Activated CD8-positive, alpha-beta T cell treated with anti-CD3 and anti-CD28 coated beads for 36 hours (primary cell): ENCODE measurements at regions of chr1 and their contacts with region 1.

Region 1: GRCh38 chr1:13699936-13700520 is at the start of gene PRDM2:
- DNase-seq: peak; percentile 64
- ATAC-seq: peak; percentile 51
- H3K4me3 Mint-ChIP-seq: peak within 1 kb of the TSS; percentile 95
- H3K27ac Mint-ChIP-seq: peak within 1 kb of the TSS; percentile 99
- H3K4me1 Mint-ChIP-seq: peaks cover 41% of the 10 kb centered on the region
- H3K27me3 Mint-ChIP-seq: no peaks in the 10 kb centered on the region
- CTCF ChIP-seq: no peak
- total RNA-seq, gene PRDM2: 41.2 to 43.6 TPM

Region 2: DNA sequence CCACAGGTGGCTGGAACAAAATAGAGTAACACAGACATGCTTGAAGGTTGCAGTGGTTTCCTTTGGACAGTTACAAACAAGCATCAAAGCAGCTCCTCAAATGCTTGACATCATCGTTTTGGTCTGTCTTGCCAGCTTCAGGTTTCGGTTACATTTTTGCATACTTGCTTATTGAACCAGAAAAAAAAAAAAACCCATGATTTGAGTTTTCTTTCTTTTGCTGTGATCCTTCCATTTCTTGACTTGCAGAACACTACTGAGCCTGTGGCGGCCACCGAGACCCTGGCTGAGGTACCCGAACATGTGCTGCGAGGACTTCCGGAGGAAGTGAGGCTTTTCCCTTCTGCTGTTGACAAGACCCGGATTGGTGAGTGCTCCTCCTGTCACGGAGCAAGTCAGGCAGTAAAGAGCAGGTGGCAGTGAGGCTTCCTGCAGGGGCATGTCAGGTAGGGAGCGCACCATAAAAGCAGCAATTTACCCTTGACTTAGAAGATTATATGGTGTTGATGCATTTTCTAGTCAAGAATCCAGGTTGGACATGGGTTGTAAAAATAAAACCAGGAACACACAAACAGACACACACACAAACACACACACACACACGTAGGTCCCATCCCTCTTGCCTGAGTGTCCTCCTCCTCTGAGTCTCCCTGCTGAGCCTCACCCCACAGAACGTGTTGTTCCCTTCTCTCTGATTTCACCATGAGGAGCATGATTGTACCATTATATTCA is 30.9 kb after region 1 on chr1:
- CTCF ChIA-PET with region 1: interaction called, 16 read pairs
- POLR2A ChIA-PET with region 1: interaction called, 12 read pairs
- intact Hi-C with region 1: loop called (anchors 2 kb)
- DNase-seq: peak; percentile 92
- ATAC-seq: peak; percentile 93
- H3K4me3 Mint-ChIP-seq: peak overlapping the region; percentile 81
- H3K27ac Mint-ChIP-seq: peak overlapping the region; percentile 98
- H3K4me1 Mint-ChIP-seq: peaks cover 83% of the 10 kb centered on the region
- H3K27me3 Mint-ChIP-seq: no peaks in the 10 kb centered on the region
- CTCF ChIP-seq: no peak

Region 3: DNA sequence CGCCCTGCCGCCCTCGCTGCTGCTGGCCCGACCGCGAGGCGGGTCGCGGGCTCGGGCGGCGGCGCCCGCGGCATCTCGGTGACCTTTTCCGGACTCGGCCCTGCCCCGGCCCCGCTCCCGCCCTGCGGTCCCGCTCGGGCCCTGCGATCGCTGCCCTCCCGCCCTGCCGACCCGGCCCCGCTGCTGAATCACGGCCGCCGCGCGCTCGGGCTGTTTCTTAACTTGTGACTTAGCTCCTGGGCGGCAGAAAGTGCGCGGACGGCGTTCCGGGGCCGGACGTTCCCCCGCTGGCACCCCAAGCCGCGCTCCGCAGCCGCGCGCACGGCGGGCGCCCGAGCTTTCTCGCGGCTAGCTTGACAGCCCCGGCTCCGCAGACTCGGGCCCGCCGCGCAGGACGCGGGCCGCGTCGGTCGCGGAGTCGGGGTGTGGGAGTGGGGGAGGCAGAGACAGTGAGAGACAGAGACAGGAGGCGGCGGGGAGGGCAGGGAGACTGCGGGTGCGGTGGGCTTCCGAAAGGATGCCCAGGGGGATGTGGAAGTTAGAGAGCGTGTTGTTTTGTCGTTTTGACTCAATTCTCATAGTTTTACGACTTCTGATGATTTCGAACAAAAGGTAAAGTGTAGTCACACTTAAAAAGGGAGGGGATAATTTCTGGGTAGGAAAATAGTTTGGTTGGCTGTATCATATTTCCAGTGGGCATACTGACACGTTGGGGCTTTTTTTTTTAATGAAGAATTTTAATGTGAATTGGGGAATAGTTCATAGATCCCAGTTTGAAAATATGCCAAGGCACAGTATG is 49.7 kb after region 1 on chr1:
- CTCF ChIA-PET with region 1: interaction called, 5 read pairs
- POLR2A ChIA-PET with region 1: interaction called, 9 read pairs
- intact Hi-C with region 1: loop called (anchors 10 kb)
- DNase-seq: peak; percentile 68
- ATAC-seq: peak; percentile 45
- H3K4me3 Mint-ChIP-seq: peak overlapping the region; percentile 88
- H3K27ac Mint-ChIP-seq: peak overlapping the region; percentile 91
- H3K4me1 Mint-ChIP-seq: peaks cover 48% of the 10 kb centered on the region
- H3K27me3 Mint-ChIP-seq: no peaks in the 10 kb centered on the region
- CTCF ChIP-seq: no peak